ENCODE measurements at regions of chr2 and their contacts with region 1.

Region 1: DNA sequence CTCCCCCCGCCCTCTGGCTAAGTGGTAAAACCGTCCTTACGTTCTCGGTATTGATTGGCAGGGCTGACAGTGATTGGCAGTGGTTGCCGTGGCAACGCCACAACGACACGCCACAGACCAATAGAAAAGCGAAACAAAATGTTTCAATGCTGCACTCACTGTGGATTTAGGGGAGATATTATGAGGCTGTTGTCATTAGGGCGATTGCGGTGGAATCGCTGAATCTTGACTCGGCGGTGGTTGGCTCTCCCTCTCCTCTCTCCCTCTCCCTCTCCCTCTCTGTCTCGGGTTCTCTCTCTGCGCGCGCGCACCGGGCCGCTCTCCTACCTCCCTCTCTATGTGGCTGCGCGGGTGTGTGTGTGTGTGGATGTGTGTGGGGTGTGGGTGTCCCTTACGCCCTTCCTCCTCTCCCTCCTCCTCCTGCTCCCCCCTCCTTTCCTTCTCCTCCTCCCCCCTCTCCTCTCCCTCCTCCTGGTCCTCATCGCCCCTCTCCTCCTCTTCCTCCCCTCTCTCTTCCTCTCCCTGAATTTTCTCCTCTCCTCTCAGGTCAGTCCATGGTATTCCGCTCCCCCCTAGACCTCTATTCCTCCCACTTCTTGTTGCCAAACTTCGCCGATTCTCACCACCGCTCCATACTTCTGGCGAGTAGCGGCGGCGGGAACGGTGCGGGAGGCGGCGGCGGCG is at the start of gene SIX3:
- DNase-seq: peak; percentile 66
- H3K4me3 Mint-ChIP-seq: peak within 1 kb of the TSS; percentile 74
- H3K27ac Mint-ChIP-seq: no peak within 1 kb of the TSS
- H3K4me1 Mint-ChIP-seq: peaks cover 49% of the 10 kb centered on the region
- H3K27me3 Mint-ChIP-seq: peaks cover 77% of the 10 kb centered on the region
- total RNA-seq, gene SIX3: not detected

Region 2: DNA sequence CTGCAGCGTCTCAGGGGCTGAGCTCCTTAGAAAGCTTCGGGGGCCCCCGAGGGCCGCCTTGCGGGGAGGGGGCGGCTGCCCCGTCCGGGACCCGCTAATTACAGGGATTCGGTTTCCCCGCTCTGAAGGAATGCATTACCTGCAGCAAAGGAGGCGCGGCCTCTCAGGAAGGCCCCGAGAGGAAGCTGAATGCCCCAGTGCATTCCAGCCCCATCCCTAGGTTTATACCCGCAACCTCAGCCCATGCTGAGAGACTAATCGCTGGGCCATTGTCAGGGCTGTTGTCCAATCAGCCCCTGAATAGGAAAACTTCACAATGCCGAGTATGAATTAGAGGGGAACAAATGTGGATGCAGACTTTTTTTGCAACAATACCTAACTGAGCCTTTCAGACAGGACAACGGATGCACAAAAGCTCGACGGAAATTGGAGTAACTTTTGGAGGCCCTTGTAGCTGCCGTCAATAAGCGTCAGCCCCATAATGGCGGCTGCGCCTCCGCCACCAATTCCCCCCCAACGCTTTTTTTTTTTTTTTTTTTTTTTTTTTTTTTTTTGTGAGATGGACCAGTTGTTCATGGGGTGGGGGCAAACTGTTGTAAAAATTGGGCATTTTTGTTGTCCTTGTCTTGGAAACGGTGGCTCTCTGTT is 138.8 kb before region 1 on chr2:
- CTCF ChIA-PET with region 1: no interaction called
- intact Hi-C with region 1: loop called (anchors 5 kb)
- DNase-seq: no peak
- H3K4me3 Mint-ChIP-seq: no peak overlapping the region
- H3K27ac Mint-ChIP-seq: no peak overlapping the region
- H3K4me1 Mint-ChIP-seq: peaks cover 14% of the 10 kb centered on the region
- H3K27me3 Mint-ChIP-seq: peaks cover 78% of the 10 kb centered on the region

Region 3: GRCh38 chr2:44930274-44931197 is 11.2 kb before region 1 on chr2:
- CTCF ChIA-PET with region 1: no interaction called
- intact Hi-C with region 1: loop called (anchors 1 kb)
- DNase-seq: no peak
- H3K4me3 Mint-ChIP-seq: peak overlapping the region; percentile 32
- H3K27ac Mint-ChIP-seq: no peak overlapping the region
- H3K4me1 Mint-ChIP-seq: peaks cover 31% of the 10 kb centered on the region
- H3K27me3 Mint-ChIP-seq: peaks cover 78% of the 10 kb centered on the region

Region 4: DNA sequence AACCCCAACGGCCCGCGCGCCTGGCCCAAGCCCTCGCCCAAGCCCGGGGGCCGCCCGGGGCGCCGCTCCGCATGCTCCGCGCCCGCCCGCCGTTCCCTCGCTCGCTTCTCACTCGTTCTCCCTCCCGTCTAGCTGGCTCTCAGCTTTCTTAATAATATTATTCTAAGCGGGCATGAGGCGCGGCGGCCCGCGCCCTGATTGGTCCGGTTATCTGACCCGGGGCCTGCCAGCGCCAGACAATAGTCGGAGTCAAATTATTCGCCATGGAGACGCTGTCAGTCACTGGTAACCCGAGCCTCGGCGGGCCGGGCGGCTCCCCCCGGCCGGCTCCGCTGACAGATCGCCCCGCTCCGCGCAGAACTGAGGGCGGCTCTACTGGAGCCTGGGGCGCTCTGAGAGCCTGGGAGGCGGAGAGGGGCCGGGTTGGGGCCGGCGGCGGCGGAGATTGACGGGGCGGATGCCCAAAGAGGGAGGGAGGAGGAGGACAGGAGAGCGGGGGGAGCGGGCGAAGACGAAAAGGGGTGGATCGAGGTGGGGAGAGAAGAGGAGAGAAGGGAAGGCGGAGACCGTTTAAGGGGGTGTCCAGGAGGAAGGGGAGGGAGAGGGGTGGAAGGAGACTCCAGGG is 67.7 kb after region 1 on chr2 and contains the start of gene SIX2:
- CTCF ChIA-PET with region 1: no interaction called
- intact Hi-C with region 1: loop called (anchors 2 kb)
- DNase-seq: no peak
- H3K4me3 Mint-ChIP-seq: peak within 1 kb of the TSS; percentile 59
- H3K27ac Mint-ChIP-seq: no peak within 1 kb of the TSS
- H3K4me1 Mint-ChIP-seq: peaks cover 30% of the 10 kb centered on the region
- H3K27me3 Mint-ChIP-seq: peaks cover 71% of the 10 kb centered on the region
- total RNA-seq, gene SIX2: not detected